ENCODE measurements at regions of chr2 and their contacts with region 1.

Region 1: DNA sequence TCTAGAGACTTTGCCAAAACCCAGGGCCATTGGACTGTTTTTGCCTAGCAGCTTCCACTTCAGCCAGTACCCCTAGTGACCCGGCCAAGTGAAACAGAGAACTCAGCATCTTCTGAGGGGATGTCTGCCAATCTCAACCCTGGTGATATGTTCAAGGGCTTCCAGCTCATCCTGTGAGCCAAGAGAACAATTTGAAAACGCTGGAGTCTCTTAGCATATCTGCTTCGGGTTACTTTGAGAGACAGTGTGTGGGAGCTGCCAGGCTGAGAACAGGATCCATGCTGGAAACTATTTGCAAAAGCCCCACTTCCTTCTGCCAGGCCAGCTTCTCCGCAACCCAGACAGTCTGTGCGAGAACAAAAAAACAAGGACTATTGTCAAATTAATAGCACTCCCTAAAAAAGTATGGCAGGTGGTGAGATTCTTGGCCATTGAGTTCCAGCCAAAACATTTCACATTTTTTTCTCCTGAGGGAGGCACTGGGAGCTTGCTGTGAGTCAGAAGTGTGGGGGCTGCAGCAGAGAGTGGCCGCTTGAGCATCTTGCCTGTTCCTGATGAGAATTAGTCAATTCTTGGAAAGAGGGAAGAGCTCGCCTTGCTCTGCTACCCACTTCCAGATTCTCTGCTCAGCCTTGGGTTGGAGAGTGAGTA is 395.6 kb upstream of the TRIB2 start:
- DNase-seq: peak; percentile 13 to 50
- ATAC-seq: peak; percentile 44 to 65
- H3K4me3 ChIP-seq: no peak overlapping the region
- H3K27ac ChIP-seq: peak overlapping the region in 1 of 4 donors; percentile 22
- H3K4me1 ChIP-seq: no peaks in the 10 kb centered on the region
- H3K27me3 ChIP-seq: no peaks in the 10 kb centered on the region
- CTCF ChIP-seq: no peak
- POLR2A ChIP-seq: no peak

Region 2: DNA sequence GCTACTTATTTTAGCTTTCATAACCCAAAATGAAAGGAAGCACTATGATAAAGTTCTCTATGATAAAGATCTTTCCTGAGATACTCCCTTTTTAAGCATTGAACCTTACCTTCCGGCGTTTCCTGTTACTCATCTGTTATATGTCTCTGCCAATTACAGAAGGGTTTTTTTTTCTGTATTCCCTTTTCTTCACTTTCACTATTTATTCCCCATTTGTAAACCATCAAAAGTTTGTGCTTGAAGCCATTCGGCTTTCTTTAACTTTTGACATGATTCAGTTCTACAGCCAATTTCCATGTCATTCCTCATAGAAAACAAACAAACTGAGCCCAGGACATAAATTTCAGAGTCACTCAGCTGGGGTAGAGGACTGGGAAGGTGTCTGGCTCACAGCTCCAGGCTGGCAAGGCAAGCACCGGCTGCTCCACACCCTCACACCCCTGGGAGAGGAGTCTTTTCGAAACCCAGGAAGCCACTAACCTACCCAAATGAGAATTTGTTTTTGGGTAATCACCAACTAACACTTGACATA is 33.8 kb before region 1 on chr2:
- in situ Hi-C with region 1: no loop called
- intact Hi-C with region 1: loop called (anchors 1 kb)
- DNase-seq: peak in 1 of 2 donors; percentile 40
- ATAC-seq: peak in 1 of 2 donors; percentile 39
- H3K4me3 ChIP-seq: no peak overlapping the region
- H3K27ac ChIP-seq: peak overlapping the region in 1 of 4 donors; percentile 13
- H3K4me1 ChIP-seq: no peaks in the 10 kb centered on the region
- H3K27me3 ChIP-seq: no peaks in the 10 kb centered on the region
- CTCF ChIP-seq: no peak
- POLR2A ChIP-seq: no peak

Region 3: DNA sequence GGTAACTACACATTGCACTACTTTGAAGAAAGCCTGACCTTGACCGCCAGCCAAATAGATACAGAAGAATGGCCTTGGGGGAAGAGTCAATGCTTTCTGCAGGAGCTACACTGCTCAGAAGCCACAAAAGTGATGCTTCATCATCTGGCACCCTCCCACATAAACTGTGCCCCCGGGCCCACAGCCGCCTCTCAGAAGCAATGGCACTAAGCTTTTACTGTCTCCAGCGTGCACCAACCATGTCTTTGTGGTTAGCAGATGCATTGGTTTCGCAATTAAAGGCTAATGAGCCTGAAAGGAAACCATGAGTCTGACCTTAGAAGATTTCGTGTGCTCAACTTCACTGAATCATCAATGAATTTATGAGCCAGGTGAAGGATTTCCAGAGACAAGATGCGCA is 186.2 kb after region 1 on chr2:
- in situ Hi-C with region 1: no loop called
- intact Hi-C with region 1: no loop called
- DNase-seq: no peak
- ATAC-seq: no peak
- H3K4me3 ChIP-seq: no peak overlapping the region
- H3K27ac ChIP-seq: no peak overlapping the region
- H3K4me1 ChIP-seq: no peaks in the 10 kb centered on the region
- H3K27me3 ChIP-seq: no peaks in the 10 kb centered on the region
- CTCF ChIP-seq: no peak
- POLR2A ChIP-seq: no peak

Region 4: GRCh38 chr2:13335862-13336535 is 1014.9 kb after region 1 on chr2:
- in situ Hi-C with region 1: no loop called
- intact Hi-C with region 1: no loop called
- DNase-seq: no peak
- ATAC-seq: no peak
- H3K4me3 ChIP-seq: no peak overlapping the region
- H3K27ac ChIP-seq: no peak overlapping the region
- H3K4me1 ChIP-seq: no peaks in the 10 kb centered on the region
- H3K27me3 ChIP-seq: no peaks in the 10 kb centered on the region
- CTCF ChIP-seq: no peak
- POLR2A ChIP-seq: no peak

Measured in gastrocnemius medialis (tissue), 4 donors.